GM12878 (cell line): ENCODE measurements at regions of chr16 and their contacts with region 1.

Region 1: GRCh38 chr16:19105891-19106624 is 7.7 kb upstream of the ITPRIPL2 start:
- DNase-seq: no peak
- ATAC-seq: no peak
- H3K4me3 ChIP-seq: no peak overlapping the region
- H3K27ac ChIP-seq: no peak overlapping the region
- H3K4me1 ChIP-seq: peaks cover 24% of the 10 kb centered on the region
- H3K27me3 ChIP-seq: no peaks in the 10 kb centered on the region
- CTCF ChIP-seq: no peak
- EP300 ChIP-seq: no peak
- POLR2A ChIP-seq: no peak
- RAD21 ChIP-seq: no peak

Region 2: GRCh38 chr16:19044769-19045168 is 61.3 kb before region 1 on chr16:
- CTCF ChIA-PET with region 1: no interaction called
- POLR2A ChIA-PET with region 1: no interaction called
- RAD21 ChIA-PET with region 1: no interaction called
- SMC1A ChIA-PET with region 1: no interaction called
- in situ Hi-C with region 1: no loop called
- intact Hi-C with region 1: no loop called
- DNase-seq: no peak
- ATAC-seq: no peak
- H3K4me3 ChIP-seq: no peak overlapping the region
- H3K27ac ChIP-seq: no peak overlapping the region
- H3K4me1 ChIP-seq: no peaks in the 10 kb centered on the region
- H3K27me3 ChIP-seq: no peaks in the 10 kb centered on the region
- CTCF ChIP-seq: no peak
- EP300 ChIP-seq: no peak
- POLR2A ChIP-seq: no peak
- RAD21 ChIP-seq: no peak

Region 3: GRCh38 chr16:19067349-19068236 is 38.5 kb before region 1 on chr16 and contains the start of gene COQ7:
- CTCF ChIA-PET with region 1: no interaction called
- POLR2A ChIA-PET with region 1: no interaction called
- RAD21 ChIA-PET with region 1: no interaction called
- SMC1A ChIA-PET with region 1: no interaction called
- in situ Hi-C with region 1: no loop called
- intact Hi-C with region 1: no loop called
- DNase-seq: peak; percentile 96
- ATAC-seq: peak; percentile 94
- H3K4me3 ChIP-seq: peak within 1 kb of the TSS; percentile 95
- H3K27ac ChIP-seq: peak within 1 kb of the TSS; percentile 99
- H3K4me1 ChIP-seq: no peaks in the 10 kb centered on the region; the same call in 1 of the 2 replicates
- H3K27me3 ChIP-seq: no peaks in the 10 kb centered on the region
- CTCF ChIP-seq: no peak
- EP300 ChIP-seq: 0 out of 4 replicates have a peak, but pooled peaks of 1 of the 2 experiments have one; percentile 69
- POLR2A ChIP-seq: peak; percentile 80
- RAD21 ChIP-seq: no peak
- polyA plus RNA-seq, gene COQ7: 3.2 to 4.3 TPM

Region 4: GRCh38 chr16:19118938-19119431 is 12.9 kb after region 1 on chr16:
- CTCF ChIA-PET with region 1: interaction called, 6 read pairs
- POLR2A ChIA-PET with region 1: interaction called, 9 read pairs
- RAD21 ChIA-PET with region 1: interaction called, 11 read pairs
- SMC1A ChIA-PET with region 1: interaction called, 36 read pairs
- in situ Hi-C with region 1: no loop called
- intact Hi-C with region 1: no loop called
- DNase-seq: no peak
- ATAC-seq: peak; percentile 2; the same call in 2 of the 3 replicates
- H3K4me3 ChIP-seq: peak overlapping the region; percentile 66
- H3K27ac ChIP-seq: peak overlapping the region; percentile 62
- H3K4me1 ChIP-seq: peaks cover 26% of the 10 kb centered on the region
- H3K27me3 ChIP-seq: no peaks in the 10 kb centered on the region
- CTCF ChIP-seq: no peak
- EP300 ChIP-seq: no peak
- POLR2A ChIP-seq: no peak
- RAD21 ChIP-seq: no peak

Region 5: DNA sequence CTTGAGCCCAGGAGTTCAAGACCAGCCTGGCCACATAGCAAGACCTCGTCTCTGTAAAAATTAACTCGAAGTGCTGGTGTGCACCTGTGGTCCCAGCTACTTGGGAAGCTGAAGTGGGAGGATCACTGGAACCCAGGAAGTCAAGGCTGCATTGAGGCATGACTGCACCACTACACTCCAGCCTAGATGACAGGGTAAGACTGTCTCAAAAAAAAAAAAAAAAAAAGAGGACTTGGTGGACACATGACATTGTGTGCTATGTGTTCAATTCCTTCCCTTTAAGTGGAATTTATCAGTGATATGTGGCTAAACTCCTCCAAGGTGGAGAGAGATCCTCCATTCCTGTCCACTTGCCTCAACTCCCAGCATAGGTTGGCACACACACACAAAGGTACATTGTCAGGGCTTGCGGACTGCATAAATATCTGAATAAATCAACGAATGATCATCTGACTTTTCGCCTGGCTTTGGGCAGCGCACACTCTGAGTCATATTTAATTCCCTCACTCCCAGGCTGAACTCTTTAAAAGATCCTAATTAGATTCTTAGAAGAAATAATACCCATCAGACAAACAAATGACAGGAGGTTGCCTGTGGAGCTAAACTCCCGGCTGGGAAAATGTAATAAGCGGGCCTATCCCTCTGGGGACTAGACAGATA is 37.0 kb after region 1 on chr16:
- CTCF ChIA-PET with region 1: no interaction called
- POLR2A ChIA-PET with region 1: no interaction called
- RAD21 ChIA-PET with region 1: no interaction called
- SMC1A ChIA-PET with region 1: no interaction called
- in situ Hi-C with region 1: no loop called
- intact Hi-C with region 1: no loop called
- DNase-seq: no peak
- ATAC-seq: no peak
- H3K4me3 ChIP-seq: no peak overlapping the region
- H3K27ac ChIP-seq: no peak overlapping the region
- H3K4me1 ChIP-seq: no peaks in the 10 kb centered on the region
- H3K27me3 ChIP-seq: 0 out of 4 replicates have a peak, but pooled peaks cover 0 to 2% of the 10 kb centered on the region in 2 experiments
- CTCF ChIP-seq: no peak
- EP300 ChIP-seq: no peak
- POLR2A ChIP-seq: no peak
- RAD21 ChIP-seq: no peak

Region 6: GRCh38 chr16:19783363-19784182 is 677.5 kb after region 1 on chr16:
- CTCF ChIA-PET with region 1: no interaction called
- POLR2A ChIA-PET with region 1: no interaction called
- RAD21 ChIA-PET with region 1: no interaction called
- SMC1A ChIA-PET with region 1: no interaction called
- in situ Hi-C with region 1: no loop called
- intact Hi-C with region 1: no loop called
- DNase-seq: no peak
- ATAC-seq: no peak
- H3K4me3 ChIP-seq: no peak overlapping the region
- H3K27ac ChIP-seq: no peak overlapping the region
- H3K4me1 ChIP-seq: no peaks in the 10 kb centered on the region
- H3K27me3 ChIP-seq: no peaks in the 10 kb centered on the region
- CTCF ChIP-seq: no peak
- EP300 ChIP-seq: no peak
- POLR2A ChIP-seq: no peak
- RAD21 ChIP-seq: no peak